ENCODE measurements at regions of chr20 and their contacts with region 1.

Region 1: DNA sequence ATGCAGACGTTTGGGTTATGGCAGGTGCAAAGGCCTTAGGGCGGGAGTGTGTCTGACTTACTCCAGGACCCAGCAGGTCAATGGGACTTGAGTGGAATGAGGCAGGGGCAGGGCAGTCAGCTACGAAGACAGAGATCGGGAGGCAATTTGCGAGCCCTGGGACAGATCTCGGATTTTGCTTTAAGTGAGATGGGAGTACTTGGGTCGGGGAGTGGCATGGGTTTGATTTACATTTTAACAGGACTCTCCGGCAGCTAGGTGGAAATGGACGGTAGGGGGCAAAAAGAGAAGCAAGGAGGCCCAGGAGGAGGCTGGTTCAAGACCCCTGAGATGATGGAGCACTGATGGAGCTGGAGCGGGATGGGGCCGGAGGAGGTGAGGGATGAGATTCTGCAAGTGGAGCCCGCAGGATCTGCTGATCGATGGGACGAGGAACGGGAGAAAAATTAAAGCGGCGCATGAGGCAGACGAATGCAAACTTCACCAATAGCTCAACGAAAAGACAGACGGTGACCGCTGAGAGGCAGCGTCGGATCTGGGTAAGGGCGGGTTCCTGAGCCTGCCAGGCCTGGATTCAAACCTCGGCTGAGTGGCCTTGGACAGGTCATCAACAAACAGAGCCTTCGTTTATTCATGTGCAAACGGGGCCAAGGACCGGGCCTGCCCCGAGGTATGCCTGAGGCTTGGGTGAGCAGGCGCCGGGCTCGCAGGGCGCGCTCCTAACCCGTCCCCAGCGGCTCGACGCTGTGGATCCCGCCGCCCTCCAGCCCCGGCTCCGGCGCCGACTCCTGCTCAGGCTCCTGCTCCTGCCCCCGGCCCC is 756 bp upstream of the RBCK1 start:
- DNase-seq: peak; percentile 75
- ATAC-seq: peak; percentile 74
- H3K4me3 Mint-ChIP-seq: peak overlapping the region; percentile 82
- H3K27ac Mint-ChIP-seq: peak overlapping the region; percentile 95
- H3K4me1 Mint-ChIP-seq: peaks cover 43% of the 10 kb centered on the region
- H3K27me3 Mint-ChIP-seq: no peaks in the 10 kb centered on the region
- CTCF ChIP-seq: no peak

Region 2: DNA sequence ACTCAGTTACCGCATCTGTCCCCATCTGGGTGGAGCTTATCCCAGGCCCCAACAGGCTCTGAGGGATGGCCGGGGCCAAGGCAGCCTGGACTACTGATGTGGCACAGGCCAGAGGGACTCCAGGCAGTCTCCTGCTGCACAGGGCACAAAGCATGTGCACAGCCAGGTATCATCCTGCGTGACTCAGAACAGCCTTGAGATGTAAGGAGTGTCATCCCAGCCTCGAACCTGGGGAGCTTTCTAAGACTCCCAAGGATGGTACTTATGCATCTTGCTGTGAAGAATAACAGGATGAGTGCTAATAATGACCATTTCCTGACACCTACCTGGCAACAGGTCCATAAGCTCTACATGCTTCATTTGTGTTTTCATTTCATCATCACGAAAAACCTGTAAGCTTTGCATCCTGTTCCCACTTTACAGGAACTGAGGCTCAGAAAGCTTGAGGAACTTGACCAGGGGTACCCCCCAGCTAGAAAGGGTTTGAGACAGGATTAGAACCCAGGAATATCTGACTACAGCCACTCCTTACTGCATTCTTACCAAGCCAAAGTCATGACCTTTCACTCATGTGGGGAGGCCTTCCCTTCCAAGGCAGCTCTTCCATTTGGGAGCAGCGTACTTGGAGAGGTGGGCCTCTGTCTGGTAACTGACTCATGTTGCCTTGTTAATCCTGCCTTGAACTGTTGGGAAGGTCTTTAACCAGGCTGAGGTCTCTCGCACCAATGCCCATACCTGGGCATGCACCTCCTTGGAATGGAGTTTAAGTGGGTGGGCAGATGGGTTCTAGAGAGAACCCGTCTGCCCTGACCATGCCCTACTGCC is 24.8 kb before region 1 on chr20:
- CTCF ChIA-PET with region 1: interaction called, 10 read pairs
- POLR2A ChIA-PET with region 1: interaction called, 6 read pairs
- intact Hi-C with region 1: no loop called
- DNase-seq: no peak
- ATAC-seq: peak; percentile 2
- H3K4me3 Mint-ChIP-seq: peak overlapping the region; percentile 83
- H3K27ac Mint-ChIP-seq: peak overlapping the region; percentile 73
- H3K4me1 Mint-ChIP-seq: peaks cover 20% of the 10 kb centered on the region
- H3K27me3 Mint-ChIP-seq: no peaks in the 10 kb centered on the region
- CTCF ChIP-seq: no peak

Region 3: DNA sequence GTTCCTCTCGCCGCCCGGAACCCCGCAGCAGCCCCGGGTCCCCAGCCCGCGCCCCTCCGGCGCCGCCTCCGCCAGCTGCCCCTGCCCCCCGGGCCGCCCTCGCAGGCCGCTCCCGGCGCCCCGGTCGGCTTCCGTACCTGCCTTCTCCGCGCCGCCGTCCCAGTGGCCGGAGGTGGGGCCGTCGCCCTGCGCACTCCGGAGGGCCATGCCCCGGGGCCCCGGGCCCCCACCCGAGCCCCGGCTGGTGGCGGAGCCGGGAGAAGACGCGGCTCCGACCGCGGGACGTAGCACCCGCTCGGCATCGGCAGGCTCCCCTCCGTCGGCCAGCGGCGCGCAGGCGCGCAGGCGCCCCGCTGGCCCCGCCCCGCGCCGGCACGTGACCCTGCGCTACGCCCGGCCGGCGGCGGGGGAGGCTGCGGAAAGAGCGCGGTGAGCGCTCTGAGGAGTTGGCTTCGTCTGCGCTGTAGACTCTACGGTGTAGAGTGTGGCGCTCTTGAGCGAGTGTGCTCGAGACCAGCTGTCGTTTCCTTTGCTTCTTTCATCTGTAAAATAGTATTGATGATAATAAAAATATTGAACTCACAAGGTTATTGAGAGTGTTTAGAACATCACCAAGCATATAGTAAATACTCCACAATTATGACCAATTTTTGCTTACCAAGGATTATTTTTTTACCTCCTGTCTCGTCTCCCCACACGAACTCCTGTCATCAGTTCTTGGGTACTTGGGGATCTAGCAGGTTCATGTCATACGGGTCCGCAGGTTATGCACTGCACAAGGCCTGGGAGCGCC is 55.1 kb after region 1 on chr20 and contains the start of gene TBC1D20:
- CTCF ChIA-PET with region 1: interaction called, 3 read pairs
- POLR2A ChIA-PET with region 1: interaction called, 7 read pairs
- intact Hi-C with region 1: loop called (anchors 5 kb)
- DNase-seq: peak; percentile 84
- ATAC-seq: peak; percentile 94
- H3K4me3 Mint-ChIP-seq: peak within 1 kb of the TSS; percentile 87
- H3K27ac Mint-ChIP-seq: peak within 1 kb of the TSS; percentile 88
- H3K4me1 Mint-ChIP-seq: peaks cover 39% of the 10 kb centered on the region
- H3K27me3 Mint-ChIP-seq: no peaks in the 10 kb centered on the region
- CTCF ChIP-seq: no peak
- total RNA-seq, gene TBC1D20: 22.2 to 23.8 TPM